Tibial artery (tissue), 4 donors: ENCODE measurements at regions of chr3 and their contacts with region 1.

Region 1: GRCh38 chr3:32655167-32655566 is 29.8 kb upstream of the CNOT10 start:
- DNase-seq: no peak
- H3K4me3 ChIP-seq: no peak overlapping the region
- H3K27ac ChIP-seq: no peak overlapping the region
- H3K4me1 ChIP-seq: no peaks in the 10 kb centered on the region
- H3K27me3 ChIP-seq: peaks cover 0 to 9% of the 10 kb centered on the region in 2 donors
- CTCF ChIP-seq: no peak

Region 2: GRCh38 chr3:32522682-32523081 is 132.5 kb before region 1 on chr3:
- intact Hi-C with region 1: loop called (anchors 5 kb)
- DNase-seq: no peak
- H3K4me3 ChIP-seq: no peak overlapping the region
- H3K27ac ChIP-seq: no peak overlapping the region
- H3K4me1 ChIP-seq: no peaks in the 10 kb centered on the region
- H3K27me3 ChIP-seq: no peaks in the 10 kb centered on the region
- CTCF ChIP-seq: no peak